ENCODE measurements at regions of chr6 and their contacts with region 1.

Region 1: GRCh38 chr6:31197559-31198305 is 27.2 kb upstream of the POU5F1 start:
- DNase-seq: peak; percentile 74 to 96 (median 80)
- ATAC-seq: peak; percentile 90
- H3K4me3 ChIP-seq: peak overlapping the region; percentile 58
- H3K27ac ChIP-seq: peak overlapping the region; percentile 98
- H3K4me1 ChIP-seq: peaks cover 14 to 17% of the 10 kb centered on the region in 2 experiments
- H3K27me3 ChIP-seq: no peaks in the 10 kb centered on the region
- CTCF ChIP-seq: peak in 1 of 3 experiments; percentile 1; a peak in 1 of 6 replicates
- EP300 ChIP-seq: peak; percentile 69
- POLR2A ChIP-seq: peak; percentile 88
- RAD21 ChIP-seq: peak in 1 of 2 experiments; percentile 10; a peak in 1 of 4 replicates

Region 2: GRCh38 chr6:31128093-31128676 is 69.5 kb before region 1 on chr6:
- CTCF ChIA-PET with region 1: interaction called, 10 read pairs
- POLR2A ChIA-PET with region 1: interaction called, 5 read pairs
- in situ Hi-C with region 1: no loop called
- intact Hi-C with region 1: loop called (anchors 2 kb)
- DNase-seq: peak; percentile 76 to 85 (median 82)
- ATAC-seq: peak; percentile 82
- H3K4me3 ChIP-seq: no peak overlapping the region
- H3K27ac ChIP-seq: no peak overlapping the region
- H3K4me1 ChIP-seq: peaks cover 6 to 9% of the 10 kb centered on the region in 2 experiments; a peak in 4 of 5 replicates
- H3K27me3 ChIP-seq: peaks cover 25 to 65% of the 10 kb centered on the region in 2 experiments; a peak in 4 of 5 replicates
- CTCF ChIP-seq: peak; percentile 80 to 90 (median 89)
- EP300 ChIP-seq: no peak
- POLR2A ChIP-seq: no peak
- RAD21 ChIP-seq: peak; percentile 23 to 56; a peak in 3 of 4 replicates

Region 3: GRCh38 chr6:31143148-31143547 is 54.6 kb before region 1 on chr6:
- CTCF ChIA-PET with region 1: interaction called, 77 read pairs
- POLR2A ChIA-PET with region 1: interaction called, 3 read pairs
- in situ Hi-C with region 1: loop called (anchors 5 kb)
- intact Hi-C with region 1: no loop called
- DNase-seq: no peak
- ATAC-seq: no peak
- H3K4me3 ChIP-seq: no peak overlapping the region
- H3K27ac ChIP-seq: no peak overlapping the region
- H3K4me1 ChIP-seq: peaks cover 0 to 5% of the 10 kb centered on the region in 2 experiments; a peak in 3 of 5 replicates
- H3K27me3 ChIP-seq: no peaks in the 10 kb centered on the region; a peak in 1 of 5 replicates
- CTCF ChIP-seq: no peak
- EP300 ChIP-seq: no peak
- POLR2A ChIP-seq: no peak
- RAD21 ChIP-seq: no peak

Region 4: GRCh38 chr6:31210741-31211532 is 13.2 kb after region 1 on chr6:
- CTCF ChIA-PET with region 1: no interaction called
- POLR2A ChIA-PET with region 1: interaction called, 11 read pairs
- in situ Hi-C with region 1: no loop called
- intact Hi-C with region 1: no loop called
- DNase-seq: no peak
- ATAC-seq: no peak
- H3K4me3 ChIP-seq: no peak overlapping the region
- H3K27ac ChIP-seq: no peak overlapping the region
- H3K4me1 ChIP-seq: no peaks in the 10 kb centered on the region
- H3K27me3 ChIP-seq: peaks cover 13 to 14% of the 10 kb centered on the region in 2 experiments; a peak in 4 of 5 replicates
- CTCF ChIP-seq: no peak
- EP300 ChIP-seq: no peak
- POLR2A ChIP-seq: no peak
- RAD21 ChIP-seq: no peak

Region 5: DNA sequence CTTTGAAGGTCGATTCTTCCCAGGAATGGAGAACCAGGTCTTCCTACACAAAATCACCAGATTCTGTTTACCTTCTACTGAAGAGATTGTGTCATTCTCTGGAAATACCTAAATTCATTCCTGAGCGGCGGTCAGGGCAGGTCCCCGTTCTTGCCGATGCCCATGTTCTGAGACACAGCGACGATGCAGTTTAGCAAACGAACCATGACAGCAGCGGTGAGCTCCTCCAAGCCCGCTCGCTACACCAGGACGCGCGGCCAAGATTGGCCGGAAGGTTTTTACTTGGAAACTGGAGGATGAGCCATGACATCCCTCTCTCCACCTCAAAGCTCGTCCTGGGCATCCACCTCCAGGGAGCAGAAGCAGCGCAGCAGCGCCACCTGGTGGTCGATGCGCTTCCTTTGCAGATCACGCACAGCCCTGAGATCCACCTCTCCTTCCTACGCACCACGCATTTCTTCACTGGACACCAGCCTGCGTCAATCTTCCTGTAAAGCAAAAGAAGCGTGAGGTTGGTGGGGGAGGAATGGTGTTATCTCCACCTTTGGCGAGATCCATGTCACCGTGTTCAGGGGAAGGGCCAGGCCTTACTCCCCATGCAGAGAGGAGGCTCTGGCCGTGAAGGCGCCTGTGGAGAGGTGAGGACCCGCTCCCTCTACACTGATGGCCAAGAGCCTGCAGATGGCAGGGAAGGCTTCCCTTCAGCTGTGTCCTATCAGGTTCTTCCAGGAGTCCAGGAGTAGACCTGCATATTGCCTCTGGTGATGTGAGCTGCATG is 169.2 kb after region 1 on chr6:
- CTCF ChIA-PET with region 1: interaction called, 29 read pairs
- POLR2A ChIA-PET with region 1: interaction called, 17 read pairs
- in situ Hi-C with region 1: loop called (anchors 5 kb)
- intact Hi-C with region 1: loop called (anchors 1 kb)
- DNase-seq: peak; percentile 88 to 95 (median 90)
- ATAC-seq: peak; percentile 100
- H3K4me3 ChIP-seq: no peak overlapping the region
- H3K27ac ChIP-seq: no peak overlapping the region
- H3K4me1 ChIP-seq: no peaks in the 10 kb centered on the region
- H3K27me3 ChIP-seq: peaks cover 15 to 28% of the 10 kb centered on the region in 2 experiments
- CTCF ChIP-seq: peak; percentile 96 to 98 (median 97)
- EP300 ChIP-seq: no peak
- POLR2A ChIP-seq: no peak
- RAD21 ChIP-seq: peak; percentile 97 to 99

Region 6: GRCh38 chr6:31441365-31442267 is 243.9 kb after region 1 on chr6:
- CTCF ChIA-PET with region 1: interaction called, 10 read pairs
- POLR2A ChIA-PET with region 1: no interaction called
- in situ Hi-C with region 1: no loop called
- intact Hi-C with region 1: loop called (anchors 1 kb)
- DNase-seq: peak; percentile 81 to 88 (median 84)
- ATAC-seq: peak; percentile 99
- H3K4me3 ChIP-seq: no peak overlapping the region
- H3K27ac ChIP-seq: no peak overlapping the region
- H3K4me1 ChIP-seq: peaks cover 0 to 6% of the 10 kb centered on the region in 2 experiments; a peak in 2 of 5 replicates
- H3K27me3 ChIP-seq: peaks cover 6 to 20% of the 10 kb centered on the region in 2 experiments
- CTCF ChIP-seq: peak; percentile 89 to 93 (median 91)
- EP300 ChIP-seq: no peak
- POLR2A ChIP-seq: no peak
- RAD21 ChIP-seq: peak; percentile 86 to 94

Region 7: GRCh38 chr6:31580807-31581433 is 383.2 kb after region 1 on chr6:
- CTCF ChIA-PET with region 1: no interaction called
- POLR2A ChIA-PET with region 1: no interaction called
- in situ Hi-C with region 1: no loop called
- intact Hi-C with region 1: loop called (anchors 10 kb)
- DNase-seq: peak; percentile 93 to 98 (median 97)
- ATAC-seq: peak; percentile 98
- H3K4me3 ChIP-seq: peak overlapping the region; percentile 62
- H3K27ac ChIP-seq: peak overlapping the region; percentile 45; the same call in 1 of the 3 replicates
- H3K4me1 ChIP-seq: peaks cover 3 to 24% of the 10 kb centered on the region in 2 experiments; a peak in 4 of 5 replicates
- H3K27me3 ChIP-seq: no peaks in the 10 kb centered on the region
- CTCF ChIP-seq: peak; percentile 98 to 99 (median 98)
- EP300 ChIP-seq: peak; percentile 37
- POLR2A ChIP-seq: peak; percentile 81
- RAD21 ChIP-seq: peak; percentile 86 to 88